ENCODE measurements at regions of chr9 and their contacts with region 1.

Region 1: DNA sequence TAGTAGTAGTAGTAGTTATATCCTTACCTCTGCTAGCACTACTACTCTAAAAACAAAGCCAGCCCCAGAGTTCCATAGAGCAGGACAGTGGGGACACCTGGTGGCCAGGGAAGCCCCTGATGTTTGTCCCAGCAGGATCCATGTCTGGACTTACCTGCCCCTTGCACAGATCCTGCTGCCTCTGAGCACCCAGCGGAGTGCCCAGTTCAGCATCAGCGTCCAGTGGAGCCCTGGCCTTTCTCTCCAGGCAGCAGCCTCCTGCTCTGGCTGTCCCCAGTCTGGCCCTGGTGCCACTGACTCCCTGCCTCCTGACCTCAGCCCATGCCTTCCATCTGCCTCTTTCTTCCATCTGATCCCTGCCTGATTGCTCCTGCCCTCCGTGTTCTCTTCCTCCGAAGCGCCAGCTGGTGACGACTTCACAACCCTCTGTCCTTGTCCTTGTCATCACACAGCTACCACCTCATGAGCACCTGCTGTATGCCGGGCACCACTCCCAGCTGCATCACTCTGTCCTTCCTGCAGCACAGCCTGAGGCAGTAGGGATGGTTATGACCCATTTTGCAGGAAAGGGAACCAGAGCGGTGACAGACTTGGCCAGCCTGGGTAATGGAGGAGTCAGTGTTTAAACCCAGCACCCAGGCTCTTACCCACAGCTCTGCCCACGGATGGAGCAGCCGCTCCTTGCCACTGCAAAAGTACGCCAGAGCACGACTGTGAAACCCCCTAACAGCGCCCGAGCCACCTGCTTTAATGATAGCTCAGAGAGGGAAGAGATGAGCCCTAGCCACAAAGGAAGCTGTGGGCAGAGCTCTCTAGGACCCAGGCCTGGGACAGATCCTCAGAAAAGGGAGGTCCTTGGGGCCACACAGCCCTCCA is 11.5 kb downstream of the SARDH start:
- DNase-seq: peak; percentile 79
- H3K4me3 Mint-ChIP-seq: no peak overlapping the region
- H3K27ac Mint-ChIP-seq: no peak overlapping the region
- H3K4me1 Mint-ChIP-seq: peaks cover 8% of the 10 kb centered on the region
- H3K27me3 Mint-ChIP-seq: peaks cover 23% of the 10 kb centered on the region

Region 2: DNA sequence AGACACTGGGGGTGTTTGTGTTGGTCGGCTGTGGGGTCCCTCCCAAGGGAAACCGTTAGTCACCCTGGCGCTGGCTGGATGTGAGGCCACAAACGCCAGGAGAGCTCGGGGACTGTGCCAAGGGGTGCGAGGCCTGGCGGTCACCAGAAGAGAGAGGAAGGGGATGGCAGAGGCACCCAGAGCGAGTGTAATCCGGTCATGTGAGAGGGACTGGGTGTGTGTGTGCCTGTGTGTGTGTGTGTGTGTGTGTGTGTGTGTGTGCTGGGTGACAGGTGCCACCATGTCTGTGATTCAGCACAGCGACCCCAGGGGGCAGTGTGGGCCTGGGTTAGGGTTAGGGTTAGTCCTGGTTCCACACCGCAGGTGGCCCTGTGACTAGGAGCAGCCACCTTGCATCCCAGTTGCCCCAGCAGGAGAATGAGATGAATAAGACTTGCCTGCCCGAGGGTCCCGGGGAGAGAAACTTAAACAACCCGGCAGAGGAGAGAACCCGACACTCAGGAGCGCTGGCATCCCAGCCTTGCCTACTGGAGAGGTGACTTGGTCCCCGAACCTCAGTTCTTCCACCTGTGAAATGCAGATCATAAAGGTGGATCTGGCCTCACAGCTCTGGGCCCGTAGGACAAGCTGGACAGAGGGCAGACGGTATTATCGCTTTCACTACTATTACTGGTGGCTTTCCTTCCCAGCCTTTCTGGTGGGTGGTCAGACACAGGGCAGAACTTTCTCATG is 193.5 kb before region 1 on chr9:
- CTCF ChIA-PET with region 1: interaction called, 24 read pairs
- DNase-seq: peak; percentile 78
- H3K4me3 Mint-ChIP-seq: no peak overlapping the region
- H3K27ac Mint-ChIP-seq: no peak overlapping the region
- H3K4me1 Mint-ChIP-seq: peaks cover 6% of the 10 kb centered on the region
- H3K27me3 Mint-ChIP-seq: peaks cover 41% of the 10 kb centered on the region

Region 3: GRCh38 chr9:133589454-133590227 is 137.0 kb before region 1 on chr9:
- CTCF ChIA-PET with region 1: interaction called, 10 read pairs
- DNase-seq: peak; percentile 51
- H3K4me3 Mint-ChIP-seq: no peak overlapping the region
- H3K27ac Mint-ChIP-seq: no peak overlapping the region
- H3K4me1 Mint-ChIP-seq: no peaks in the 10 kb centered on the region
- H3K27me3 Mint-ChIP-seq: peaks cover 30% of the 10 kb centered on the region

Region 4: DNA sequence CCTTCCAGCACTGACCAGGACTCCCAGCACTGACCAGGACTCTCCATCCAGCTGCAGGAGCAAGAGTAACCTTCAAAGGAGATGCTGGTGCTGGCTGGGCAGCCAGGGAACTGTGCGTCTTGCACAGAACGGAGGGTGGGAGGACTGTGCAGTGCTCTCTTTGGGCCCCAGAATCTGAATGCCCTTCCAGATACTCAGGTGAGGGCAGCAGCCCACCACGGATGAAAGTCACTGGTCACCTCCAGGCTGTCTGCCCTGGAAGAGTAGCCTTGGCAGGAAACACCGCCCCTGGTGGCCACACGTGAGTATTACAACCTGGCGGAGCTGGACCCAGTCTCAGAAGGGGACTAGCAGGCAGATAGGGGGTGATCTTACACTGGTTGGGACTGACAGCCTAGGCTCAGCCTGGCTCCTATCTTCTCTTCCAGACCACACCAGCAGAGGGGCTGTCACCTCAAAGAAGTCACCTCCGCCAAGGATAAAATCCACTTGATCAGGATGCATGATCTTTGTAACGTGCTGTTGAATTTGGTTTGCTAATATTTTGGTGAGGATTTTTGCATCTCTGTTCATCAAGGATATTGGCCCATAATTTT is 16.3 kb after region 1 on chr9:
- CTCF ChIA-PET with region 1: interaction called, 10 read pairs
- DNase-seq: peak; percentile 81
- H3K4me3 Mint-ChIP-seq: no peak overlapping the region
- H3K27ac Mint-ChIP-seq: no peak overlapping the region
- H3K4me1 Mint-ChIP-seq: no peaks in the 10 kb centered on the region
- H3K27me3 Mint-ChIP-seq: peaks cover 28% of the 10 kb centered on the region